Calu3 (cell line): ENCODE measurements at regions of chr19 and their contacts with region 1.

Region 1: DNA sequence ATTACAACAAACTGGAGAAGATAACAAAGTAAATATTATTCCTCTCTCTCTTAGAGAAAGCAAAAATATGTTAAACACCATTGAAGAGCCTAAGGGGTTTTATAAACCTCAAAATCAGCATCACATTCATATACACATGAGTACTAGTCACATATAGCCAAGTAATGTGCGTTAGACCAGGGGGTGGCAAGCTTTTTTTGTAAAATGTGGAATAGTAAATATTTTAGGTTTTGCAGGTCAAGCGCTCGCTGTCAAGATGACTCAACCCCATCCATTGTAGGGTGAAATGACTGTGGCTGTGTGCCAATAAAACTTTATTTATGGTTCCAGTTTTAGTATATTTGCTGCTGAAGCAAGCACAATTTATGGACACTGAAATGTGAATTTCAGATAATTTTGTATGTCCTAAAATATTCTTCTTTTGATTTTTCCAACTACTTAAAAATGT is 21.7 kb downstream of the RFX2 start:
- DNase-seq: no peak
- H3K4me3 Mint-ChIP-seq: peak overlapping the region; percentile 64
- H3K27ac Mint-ChIP-seq: peak overlapping the region; percentile 91
- H3K4me1 Mint-ChIP-seq: peaks cover 21% of the 10 kb centered on the region
- H3K27me3 Mint-ChIP-seq: no peaks in the 10 kb centered on the region
- CTCF ChIP-seq: no peak

Region 2: DNA sequence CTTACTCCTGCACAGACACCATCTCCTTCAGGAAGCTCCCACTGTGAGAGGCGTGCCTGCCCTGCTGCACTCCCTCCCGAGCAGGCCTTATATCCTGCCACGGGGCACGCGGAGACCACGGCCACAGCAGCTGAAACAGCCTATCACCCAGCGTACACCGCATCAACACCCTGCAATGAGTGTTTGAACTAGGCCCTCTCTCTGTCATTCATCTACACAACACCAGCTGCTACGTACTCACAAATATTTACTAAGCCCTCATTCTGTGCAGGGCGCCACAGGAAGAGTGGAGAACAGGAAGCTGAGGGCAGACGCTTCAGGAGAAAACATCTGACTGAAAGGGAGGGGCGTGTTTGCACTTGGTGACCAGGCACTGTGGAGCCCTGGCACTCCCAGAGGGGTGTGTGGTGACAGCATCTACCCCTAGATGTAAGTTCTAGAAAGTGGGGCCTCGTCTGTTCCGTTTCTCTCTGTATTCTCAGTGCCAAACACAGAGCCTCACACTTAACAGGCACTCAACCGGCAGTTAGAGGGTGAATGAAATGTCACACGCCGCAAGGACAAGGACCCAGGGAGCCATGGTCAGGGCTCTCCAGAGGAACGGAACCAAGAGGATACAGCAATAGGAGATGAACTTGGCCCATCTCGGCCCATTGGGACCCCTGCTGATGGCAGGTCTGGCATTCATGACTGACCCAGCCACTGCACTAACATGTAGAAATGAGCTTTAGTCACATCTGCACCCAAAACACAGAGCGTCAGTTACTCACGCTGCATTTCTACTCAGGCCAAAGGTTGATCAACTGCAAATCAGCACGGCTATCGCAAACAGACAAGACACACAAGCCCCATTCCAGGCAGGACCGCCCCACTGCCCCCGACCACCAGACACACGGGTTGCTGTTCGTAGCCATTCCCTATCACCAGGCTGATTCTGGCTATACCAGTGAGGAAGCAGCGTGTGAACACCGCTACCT is 126.4 kb before region 1 on chr19:
- CTCF ChIA-PET with region 1: no interaction called
- intact Hi-C with region 1: no loop called
- DNase-seq: peak; percentile 11
- H3K4me3 Mint-ChIP-seq: no peak overlapping the region
- H3K27ac Mint-ChIP-seq: no peak overlapping the region
- H3K4me1 Mint-ChIP-seq: peaks cover 26% of the 10 kb centered on the region
- H3K27me3 Mint-ChIP-seq: no peaks in the 10 kb centered on the region
- CTCF ChIP-seq: no peak

Region 3: GRCh38 chr19:6038634-6039405 is 49.8 kb before region 1 on chr19:
- CTCF ChIA-PET with region 1: no interaction called
- intact Hi-C with region 1: no loop called
- DNase-seq: no peak
- H3K4me3 Mint-ChIP-seq: no peak overlapping the region
- H3K27ac Mint-ChIP-seq: no peak overlapping the region
- H3K4me1 Mint-ChIP-seq: no peaks in the 10 kb centered on the region
- H3K27me3 Mint-ChIP-seq: no peaks in the 10 kb centered on the region
- CTCF ChIP-seq: no peak

Region 4: GRCh38 chr19:6110360-6110977 is 21.8 kb after region 1 on chr19 and contains the start of gene RFX2:
- CTCF ChIA-PET with region 1: interaction called, 7 read pairs
- intact Hi-C with region 1: loop called (anchors 1 kb)
- DNase-seq: peak; percentile 97
- H3K4me3 Mint-ChIP-seq: peak within 1 kb of the TSS; percentile 77
- H3K27ac Mint-ChIP-seq: peak within 1 kb of the TSS; percentile 75
- H3K4me1 Mint-ChIP-seq: peaks cover 19% of the 10 kb centered on the region
- H3K27me3 Mint-ChIP-seq: no peaks in the 10 kb centered on the region
- CTCF ChIP-seq: no peak
- total RNA-seq, gene RFX2: 9.3 and 13.7 TPM in 2 replicates

Region 5: GRCh38 chr19:6185835-6186834 is 97.5 kb after region 1 on chr19:
- CTCF ChIA-PET with region 1: no interaction called
- intact Hi-C with region 1: no loop called
- DNase-seq: no peak
- H3K4me3 Mint-ChIP-seq: no peak overlapping the region
- H3K27ac Mint-ChIP-seq: no peak overlapping the region
- H3K4me1 Mint-ChIP-seq: no peaks in the 10 kb centered on the region
- H3K27me3 Mint-ChIP-seq: peaks cover 22% of the 10 kb centered on the region
- CTCF ChIP-seq: no peak